GM12878 (cell line): ENCODE measurements at regions of chr20 and their contacts with region 1.

Region 1: DNA sequence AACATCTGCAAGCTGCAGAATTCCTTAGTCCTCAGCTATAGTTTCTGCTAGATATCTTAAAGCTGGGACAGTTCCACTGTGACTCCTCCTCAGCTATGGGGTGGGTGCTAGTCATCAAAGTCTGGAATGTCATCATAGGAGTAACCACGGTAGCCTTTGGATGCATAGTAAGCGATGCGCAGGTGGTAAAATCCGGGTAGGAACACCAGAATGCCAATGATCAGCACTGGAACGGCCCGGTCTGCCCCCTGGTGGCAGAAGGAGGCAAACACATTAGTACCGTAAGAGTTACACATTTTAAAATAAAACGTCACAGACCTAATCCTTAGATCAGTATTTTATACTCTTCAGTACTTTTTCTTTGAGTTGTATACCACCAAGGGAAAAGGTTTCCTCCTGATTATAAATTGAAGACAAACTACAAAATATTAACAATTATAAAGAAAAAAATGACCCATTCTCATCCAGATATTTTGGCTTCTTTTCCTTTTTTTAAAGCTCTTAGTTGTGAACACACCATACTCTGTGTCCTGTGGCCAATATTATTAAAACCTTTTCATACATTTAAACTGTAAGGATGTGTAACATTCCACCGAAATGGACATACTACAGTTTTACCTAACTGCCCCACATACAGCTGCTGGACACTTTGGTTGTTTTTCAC is 18.9 kb downstream of the PCNA start:
- DNase-seq: no peak
- ATAC-seq: peak; percentile 94
- H3K4me3 ChIP-seq: no peak overlapping the region
- H3K27ac ChIP-seq: no peak overlapping the region
- H3K4me1 ChIP-seq: no peaks in the 10 kb centered on the region
- H3K27me3 ChIP-seq: no peaks in the 10 kb centered on the region
- CTCF ChIP-seq: peak; percentile 72 to 85 (median 81)
- EP300 ChIP-seq: no peak
- POLR2A ChIP-seq: no peak
- RAD21 ChIP-seq: peak; percentile 85

Region 2: DNA sequence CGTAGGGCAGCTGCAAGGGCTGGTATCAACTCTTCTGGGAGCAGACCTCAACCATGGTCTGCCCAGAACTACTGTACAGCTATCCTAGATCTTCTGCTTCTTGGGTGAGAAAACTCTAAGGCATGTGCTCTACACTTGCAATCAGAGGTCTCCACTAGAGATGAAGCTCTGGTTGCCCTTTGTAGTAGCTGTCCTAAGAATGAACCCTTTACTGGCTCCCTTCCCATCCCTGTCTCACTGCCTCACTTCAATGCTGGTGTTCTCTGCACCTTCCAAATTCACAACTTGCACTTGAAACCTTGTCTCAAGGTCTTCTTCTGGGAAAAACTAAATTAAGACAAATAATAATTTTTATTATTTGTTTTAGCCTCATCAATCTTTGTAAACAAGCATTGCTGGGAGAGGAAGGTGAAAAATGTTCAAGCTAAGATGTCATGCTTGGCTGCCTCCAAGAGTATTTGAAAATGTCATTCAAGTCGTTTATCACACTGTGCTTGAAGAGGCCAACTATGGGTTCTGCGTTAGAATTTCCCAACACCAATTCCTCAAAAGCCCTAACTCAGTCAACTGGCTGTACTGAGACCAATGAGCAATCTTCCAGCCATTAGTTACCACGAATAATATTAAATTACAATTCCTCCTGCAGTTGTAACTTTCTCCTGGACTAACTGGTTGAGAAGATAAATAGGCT is 634.8 kb before region 1 on chr20:
- CTCF ChIA-PET with region 1: no interaction called
- POLR2A ChIA-PET with region 1: no interaction called
- RAD21 ChIA-PET with region 1: no interaction called
- SMC1A ChIA-PET with region 1: no interaction called
- in situ Hi-C with region 1: no loop called
- intact Hi-C with region 1: no loop called
- DNase-seq: no peak
- ATAC-seq: no peak
- H3K4me3 ChIP-seq: no peak overlapping the region
- H3K27ac ChIP-seq: no peak overlapping the region
- H3K4me1 ChIP-seq: no peaks in the 10 kb centered on the region
- H3K27me3 ChIP-seq: peaks cover 0 to 2% of the 10 kb centered on the region in 2 experiments; a peak in 2 of 4 replicates
- CTCF ChIP-seq: no peak
- EP300 ChIP-seq: no peak
- POLR2A ChIP-seq: no peak
- RAD21 ChIP-seq: no peak

Region 3: GRCh38 chr20:4813863-4814695 is 286.7 kb before region 1 on chr20:
- CTCF ChIA-PET with region 1: interaction called, 7 read pairs
- POLR2A ChIA-PET with region 1: no interaction called
- RAD21 ChIA-PET with region 1: interaction called, 15 read pairs
- SMC1A ChIA-PET with region 1: interaction called, 5 read pairs
- in situ Hi-C with region 1: no loop called
- intact Hi-C with region 1: no loop called
- DNase-seq: peak; percentile 91
- ATAC-seq: peak; percentile 63
- H3K4me3 ChIP-seq: peak overlapping the region; percentile 71
- H3K27ac ChIP-seq: peak overlapping the region; percentile 98
- H3K4me1 ChIP-seq: peaks cover 66% of the 10 kb centered on the region
- H3K27me3 ChIP-seq: no peaks in the 10 kb centered on the region
- CTCF ChIP-seq: peak in 2 of 3 experiments; percentile 1 to 10; a peak in 1 of 6 replicates
- EP300 ChIP-seq: peak in 1 of 2 experiments; percentile 62; a peak in 2 of 4 replicates
- POLR2A ChIP-seq: no peak; the same call in 1 of the 2 replicates
- RAD21 ChIP-seq: no peak

Region 4: GRCh38 chr20:4966826-4967751 is 133.7 kb before region 1 on chr20:
- CTCF ChIA-PET with region 1: interaction called, 14 read pairs
- POLR2A ChIA-PET with region 1: no interaction called
- RAD21 ChIA-PET with region 1: interaction called, 16 read pairs
- SMC1A ChIA-PET with region 1: interaction called, 15 read pairs
- in situ Hi-C with region 1: no loop called
- intact Hi-C with region 1: loop called (anchors 5 kb)
- DNase-seq: no peak
- ATAC-seq: no peak
- H3K4me3 ChIP-seq: no peak overlapping the region
- H3K27ac ChIP-seq: no peak overlapping the region
- H3K4me1 ChIP-seq: peaks cover 4% of the 10 kb centered on the region
- H3K27me3 ChIP-seq: no peaks in the 10 kb centered on the region
- CTCF ChIP-seq: no peak
- EP300 ChIP-seq: no peak
- POLR2A ChIP-seq: no peak
- RAD21 ChIP-seq: no peak

Region 5: DNA sequence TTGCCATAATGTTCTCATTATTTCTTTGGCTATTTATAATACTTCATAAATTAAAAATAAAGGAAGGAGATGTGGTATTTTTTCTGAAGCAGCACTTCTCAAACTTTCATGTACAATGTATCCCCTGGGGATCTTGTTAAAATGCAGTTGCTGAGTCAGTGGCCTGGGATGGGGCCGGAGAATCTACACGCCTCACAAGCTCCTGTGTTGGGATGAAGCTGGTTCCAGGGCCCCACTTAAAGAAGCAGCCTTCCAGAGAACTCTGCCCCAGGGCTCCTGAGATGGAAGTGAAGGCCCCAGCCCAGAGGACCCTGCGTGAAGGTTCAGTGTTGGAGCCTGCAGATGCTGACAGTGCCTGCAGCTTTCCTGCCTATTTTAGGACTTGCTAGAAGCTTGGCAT is 59.4 kb before region 1 on chr20:
- CTCF ChIA-PET with region 1: interaction called, 42 read pairs
- POLR2A ChIA-PET with region 1: no interaction called
- RAD21 ChIA-PET with region 1: interaction called, 14 read pairs
- SMC1A ChIA-PET with region 1: interaction called, 20 read pairs
- in situ Hi-C with region 1: no loop called
- intact Hi-C with region 1: no loop called
- DNase-seq: no peak
- ATAC-seq: no peak
- H3K4me3 ChIP-seq: no peak overlapping the region
- H3K27ac ChIP-seq: no peak overlapping the region
- H3K4me1 ChIP-seq: peaks cover 3% of the 10 kb centered on the region; the same call in 1 of the 2 replicates
- H3K27me3 ChIP-seq: no peaks in the 10 kb centered on the region; a peak in 1 of 4 replicates
- CTCF ChIP-seq: no peak
- EP300 ChIP-seq: no peak
- POLR2A ChIP-seq: no peak
- RAD21 ChIP-seq: no peak

Region 6: GRCh38 chr20:5072756-5073659 is 27.8 kb before region 1 on chr20:
- CTCF ChIA-PET with region 1: interaction called, 21 read pairs
- POLR2A ChIA-PET with region 1: no interaction called
- RAD21 ChIA-PET with region 1: interaction called, 17 read pairs
- SMC1A ChIA-PET with region 1: interaction called, 17 read pairs
- in situ Hi-C with region 1: no loop called
- intact Hi-C with region 1: no loop called
- DNase-seq: no peak
- ATAC-seq: peak; percentile 2; the same call in 1 of the 3 replicates
- H3K4me3 ChIP-seq: no peak overlapping the region
- H3K27ac ChIP-seq: no peak overlapping the region
- H3K4me1 ChIP-seq: peaks cover 22% of the 10 kb centered on the region
- H3K27me3 ChIP-seq: no peaks in the 10 kb centered on the region; a peak in 1 of 4 replicates
- CTCF ChIP-seq: no peak
- EP300 ChIP-seq: no peak
- POLR2A ChIP-seq: no peak
- RAD21 ChIP-seq: no peak